GM12878 (cell line): ENCODE measurements at regions of chr2 and their contacts with region 1.

Region 1: DNA sequence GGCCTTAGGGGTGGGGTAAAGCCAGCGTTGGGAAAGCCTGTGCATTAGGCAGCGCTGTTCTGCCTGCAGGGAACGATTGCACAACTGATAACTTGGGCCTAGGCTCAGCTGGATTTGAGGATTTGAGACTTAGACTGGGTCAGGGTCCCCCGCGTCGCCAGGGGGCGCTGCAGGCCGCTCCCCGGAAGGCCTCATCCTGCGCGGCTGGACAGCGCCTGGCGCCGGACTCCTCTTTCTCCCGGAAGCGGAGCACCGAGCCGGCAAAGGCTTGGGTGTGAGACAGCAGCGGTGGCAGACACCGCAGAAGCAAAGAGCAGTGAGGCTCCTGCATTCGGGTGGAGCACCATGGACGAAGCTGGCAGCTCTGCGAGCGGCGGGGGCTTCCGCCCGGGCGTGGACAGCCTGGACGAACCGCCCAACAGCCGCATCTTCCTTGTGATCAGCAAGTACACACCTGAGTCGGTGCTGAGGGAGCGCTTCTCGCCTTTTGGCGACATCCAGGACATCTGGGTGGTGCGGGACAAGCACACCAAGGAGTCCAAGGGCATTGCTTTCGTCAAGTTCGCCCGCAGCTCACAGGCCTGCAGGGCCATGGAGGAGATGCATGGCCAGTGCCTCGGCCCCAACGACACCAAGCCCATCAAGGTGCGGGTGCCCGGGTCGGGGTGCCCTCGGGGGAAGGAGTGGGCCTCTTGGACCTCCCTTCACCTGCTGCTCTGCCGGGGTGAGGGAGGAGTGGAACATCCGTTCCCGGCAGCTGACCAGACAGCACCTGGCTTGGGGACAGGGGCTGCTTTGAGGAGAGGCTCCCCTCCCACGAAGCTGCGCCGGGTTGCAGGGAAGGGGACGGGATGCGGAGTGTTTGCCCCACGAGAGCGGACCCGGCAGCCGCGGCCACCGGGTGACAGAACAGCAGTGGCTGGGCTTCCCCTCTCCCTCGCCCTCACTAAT is at the start of gene RBM45:
- DNase-seq: peak; percentile 60
- ATAC-seq: peak; percentile 94
- H3K4me3 ChIP-seq: peak within 1 kb of the TSS; percentile 92
- H3K27ac ChIP-seq: peak within 1 kb of the TSS; percentile 60
- H3K4me1 ChIP-seq: peaks cover 12% of the 10 kb centered on the region
- H3K27me3 ChIP-seq: no peaks in the 10 kb centered on the region
- CTCF ChIP-seq: peak; percentile 98
- EP300 ChIP-seq: peak; percentile 21 to 34; a peak in 1 of 4 replicates
- POLR2A ChIP-seq: peak; percentile 96
- RAD21 ChIP-seq: peak; percentile 68
- polyA plus RNA-seq, gene RBM45: 6.2 to 12.8 TPM

Region 2: GRCh38 chr2:178101321-178102079 is 11.0 kb before region 1 on chr2:
- CTCF ChIA-PET with region 1: interaction called, 10 read pairs
- POLR2A ChIA-PET with region 1: interaction called, 8 read pairs
- RAD21 ChIA-PET with region 1: no interaction called
- SMC1A ChIA-PET with region 1: no interaction called
- in situ Hi-C with region 1: no loop called
- intact Hi-C with region 1: no loop called
- DNase-seq: no peak
- ATAC-seq: no peak
- H3K4me3 ChIP-seq: no peak overlapping the region
- H3K27ac ChIP-seq: no peak overlapping the region
- H3K4me1 ChIP-seq: no peaks in the 10 kb centered on the region
- H3K27me3 ChIP-seq: no peaks in the 10 kb centered on the region; a peak in 1 of 4 replicates
- CTCF ChIP-seq: no peak
- EP300 ChIP-seq: no peak
- POLR2A ChIP-seq: no peak
- RAD21 ChIP-seq: no peak

Region 3: DNA sequence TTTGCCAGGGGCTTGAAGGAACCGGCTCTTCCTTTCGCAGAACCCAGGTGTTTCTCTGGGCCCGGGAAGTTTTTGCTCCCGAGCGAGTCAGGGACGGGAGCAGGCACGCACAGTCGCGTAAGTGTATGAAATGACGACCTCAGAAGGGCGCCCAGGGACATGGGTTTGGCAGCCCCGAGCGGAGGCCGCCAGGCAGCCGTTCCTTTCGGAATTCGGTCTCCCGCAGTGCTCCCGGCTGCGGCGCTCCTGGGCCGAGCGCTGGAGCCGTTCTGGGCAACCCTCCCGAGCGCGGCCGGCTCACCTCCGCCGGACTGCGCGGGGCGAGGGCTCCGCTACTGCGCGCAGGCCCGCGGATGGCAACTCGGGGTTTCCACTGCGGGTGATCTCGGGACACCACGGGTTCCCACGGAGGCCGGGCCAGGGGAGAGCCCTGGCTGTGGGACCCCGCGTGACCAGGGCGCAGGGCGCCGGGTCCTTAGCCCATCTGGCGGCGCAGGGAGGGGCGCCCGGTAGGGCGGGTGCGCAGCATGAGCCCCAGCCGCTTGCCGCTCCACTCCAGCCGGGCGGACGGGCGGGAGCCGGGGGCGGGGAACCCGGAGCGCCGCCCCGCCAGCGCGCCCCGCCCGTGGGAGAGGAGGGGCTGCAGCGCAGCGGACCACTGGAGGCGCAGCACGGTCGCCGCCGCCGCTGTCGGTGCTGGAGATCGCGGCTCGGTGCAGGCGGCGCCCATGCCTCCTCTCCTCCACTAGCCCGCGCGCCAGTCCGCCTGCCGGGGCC is 81.5 kb after region 1 on chr2 and contains the start of gene OSBPL6:
- CTCF ChIA-PET with region 1: no interaction called
- POLR2A ChIA-PET with region 1: no interaction called
- RAD21 ChIA-PET with region 1: no interaction called
- SMC1A ChIA-PET with region 1: no interaction called
- in situ Hi-C with region 1: no loop called
- intact Hi-C with region 1: loop called (anchors 2 kb)
- DNase-seq: no peak
- ATAC-seq: peak; percentile 95
- H3K4me3 ChIP-seq: peak within 1 kb of the TSS; percentile 73
- H3K27ac ChIP-seq: no peak within 1 kb of the TSS
- H3K4me1 ChIP-seq: no peaks in the 10 kb centered on the region
- H3K27me3 ChIP-seq: peaks cover 4 to 16% of the 10 kb centered on the region in 2 experiments; a peak in 3 of 4 replicates
- CTCF ChIP-seq: 0 out of 6 replicates have a peak, but pooled peaks of 1 of the 3 experiments have one; percentile 4
- EP300 ChIP-seq: no peak
- POLR2A ChIP-seq: peak; percentile 37; the same call in 1 of the 2 replicates
- RAD21 ChIP-seq: no peak
- polyA plus RNA-seq, gene OSBPL6: not detected

Region 4: DNA sequence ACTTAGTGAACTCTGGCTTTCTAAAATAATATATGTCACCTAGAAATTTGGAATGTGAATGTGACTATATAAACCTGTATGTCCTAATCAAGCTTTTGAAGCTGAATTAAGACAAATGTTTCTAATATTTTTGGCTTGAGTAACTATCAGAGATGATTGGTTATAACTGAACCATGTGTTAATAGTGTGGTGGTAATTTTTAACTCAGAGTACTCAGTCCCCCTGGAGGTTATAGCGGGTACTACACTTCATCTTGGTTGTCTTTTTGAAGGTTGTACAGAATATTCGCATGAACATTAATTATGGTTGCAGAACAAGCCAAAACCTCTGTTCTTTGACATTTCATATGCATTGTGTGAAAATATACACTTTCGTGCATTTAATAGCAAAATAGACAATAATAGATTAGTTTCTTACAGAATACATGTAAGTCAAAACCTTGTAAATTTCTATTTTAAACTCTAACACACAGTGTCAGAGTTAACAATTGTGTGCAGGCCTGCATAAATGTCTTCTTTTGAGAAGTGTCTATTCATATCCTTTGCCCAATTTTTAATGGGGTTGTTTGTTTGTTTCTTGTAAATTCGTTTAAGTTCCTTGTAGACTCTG is 167.9 kb after region 1 on chr2:
- CTCF ChIA-PET with region 1: interaction called, 27 read pairs
- POLR2A ChIA-PET with region 1: no interaction called
- RAD21 ChIA-PET with region 1: interaction called, 4 read pairs
- SMC1A ChIA-PET with region 1: interaction called, 5 read pairs
- in situ Hi-C with region 1: loop called (anchors 5 kb)
- intact Hi-C with region 1: loop called (anchors 1 kb)
- DNase-seq: no peak
- ATAC-seq: peak; percentile 83
- H3K4me3 ChIP-seq: no peak overlapping the region
- H3K27ac ChIP-seq: no peak overlapping the region
- H3K4me1 ChIP-seq: no peaks in the 10 kb centered on the region
- H3K27me3 ChIP-seq: no peaks in the 10 kb centered on the region
- CTCF ChIP-seq: peak; percentile 57 to 66 (median 60)
- EP300 ChIP-seq: no peak
- POLR2A ChIP-seq: no peak
- RAD21 ChIP-seq: peak; percentile 68

Region 5: GRCh38 chr2:178397002-178397605 is 284.6 kb after region 1 on chr2:
- CTCF ChIA-PET with region 1: interaction called, 8 read pairs
- POLR2A ChIA-PET with region 1: interaction called, 3 read pairs
- RAD21 ChIA-PET with region 1: interaction called, 3 read pairs
- SMC1A ChIA-PET with region 1: interaction called, 4 read pairs
- in situ Hi-C with region 1: no loop called
- intact Hi-C with region 1: loop called (anchors 5 kb)
- DNase-seq: no peak
- ATAC-seq: peak; percentile 96
- H3K4me3 ChIP-seq: no peak overlapping the region
- H3K27ac ChIP-seq: no peak overlapping the region
- H3K4me1 ChIP-seq: no peaks in the 10 kb centered on the region
- H3K27me3 ChIP-seq: no peaks in the 10 kb centered on the region
- CTCF ChIP-seq: peak; percentile 48 to 63 (median 54); a peak in 5 of 6 replicates
- EP300 ChIP-seq: no peak
- POLR2A ChIP-seq: no peak
- RAD21 ChIP-seq: peak; percentile 68

Region 6: DNA sequence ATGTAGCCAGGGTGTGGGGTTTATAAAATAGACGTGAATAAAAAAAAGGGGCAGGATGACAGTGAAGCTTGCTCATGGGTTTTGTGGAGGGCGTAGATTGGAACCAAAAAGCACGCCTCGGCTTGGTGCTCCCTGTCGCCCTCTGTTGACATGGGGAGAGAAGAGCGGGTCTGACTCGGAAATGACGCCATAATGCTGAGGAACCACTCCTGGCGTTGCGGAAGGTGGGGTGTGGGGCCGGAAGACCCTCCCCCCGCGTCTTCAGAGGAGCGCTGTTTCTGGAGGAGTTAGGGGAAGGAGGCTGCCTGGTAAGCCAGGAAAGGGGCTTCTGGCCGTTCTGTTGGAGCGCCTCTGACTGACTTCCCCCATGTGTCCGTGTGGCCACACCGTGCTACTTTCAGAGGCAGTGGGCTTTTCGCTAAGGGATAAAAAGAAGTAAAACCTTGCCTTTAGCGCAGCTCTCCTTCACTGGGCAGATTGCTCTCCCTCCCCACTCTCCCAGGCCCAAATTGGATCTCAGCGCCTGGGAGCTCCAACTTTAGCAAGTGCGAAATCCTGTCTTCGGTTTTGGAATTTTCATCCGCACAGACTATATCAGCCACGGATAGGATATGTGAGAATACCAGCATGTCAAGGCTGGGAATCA is 410.6 kb after region 1 on chr2:
- CTCF ChIA-PET with region 1: interaction called, 3 read pairs
- POLR2A ChIA-PET with region 1: no interaction called
- RAD21 ChIA-PET with region 1: no interaction called
- SMC1A ChIA-PET with region 1: no interaction called
- in situ Hi-C with region 1: no loop called
- intact Hi-C with region 1: loop called (anchors 5 kb)
- DNase-seq: peak; percentile 57
- ATAC-seq: peak; percentile 91
- H3K4me3 ChIP-seq: peak overlapping the region; percentile 80
- H3K27ac ChIP-seq: peak overlapping the region; percentile 74
- H3K4me1 ChIP-seq: peaks cover 11% of the 10 kb centered on the region; the same call in 1 of the 2 replicates
- H3K27me3 ChIP-seq: no peaks in the 10 kb centered on the region
- CTCF ChIP-seq: peak; percentile 77 to 93 (median 87)
- EP300 ChIP-seq: no peak
- POLR2A ChIP-seq: peak; percentile 88
- RAD21 ChIP-seq: peak; percentile 43